Activated CD4-positive, alpha-beta T cell treated with anti-CD3 and anti-CD28 coated beads for 36 hours (primary cell): ENCODE measurements at regions of chrX and their contacts with region 1.

Region 1: GRCh38 chrX:78517124-78517523 is 142.0 kb downstream of the RTL3 start:
- DNase-seq: peak; percentile 70
- ATAC-seq: peak; percentile 83
- H3K4me3 Mint-ChIP-seq: peak overlapping the region; percentile 23
- H3K27ac Mint-ChIP-seq: peak overlapping the region; percentile 84
- H3K4me1 Mint-ChIP-seq: peaks cover 48% of the 10 kb centered on the region
- H3K27me3 Mint-ChIP-seq: no peaks in the 10 kb centered on the region

Region 2: GRCh38 chrX:77899081-77899828 is 617.9 kb before region 1 on chrX and contains the start of gene COX7B:
- CTCF ChIA-PET with region 1: no interaction called
- POLR2A ChIA-PET with region 1: no interaction called
- intact Hi-C with region 1: loop called in 1 of 2 experiments (anchors 10 kb)
- DNase-seq: peak; percentile 71
- ATAC-seq: peak; percentile 70
- H3K4me3 Mint-ChIP-seq: peak within 1 kb of the TSS; percentile 96
- H3K27ac Mint-ChIP-seq: peak within 1 kb of the TSS; percentile 97
- H3K4me1 Mint-ChIP-seq: peaks cover 20% of the 10 kb centered on the region
- H3K27me3 Mint-ChIP-seq: no peaks in the 10 kb centered on the region
- total RNA-seq, gene COX7B: 303 to 375 TPM

Region 3: DNA sequence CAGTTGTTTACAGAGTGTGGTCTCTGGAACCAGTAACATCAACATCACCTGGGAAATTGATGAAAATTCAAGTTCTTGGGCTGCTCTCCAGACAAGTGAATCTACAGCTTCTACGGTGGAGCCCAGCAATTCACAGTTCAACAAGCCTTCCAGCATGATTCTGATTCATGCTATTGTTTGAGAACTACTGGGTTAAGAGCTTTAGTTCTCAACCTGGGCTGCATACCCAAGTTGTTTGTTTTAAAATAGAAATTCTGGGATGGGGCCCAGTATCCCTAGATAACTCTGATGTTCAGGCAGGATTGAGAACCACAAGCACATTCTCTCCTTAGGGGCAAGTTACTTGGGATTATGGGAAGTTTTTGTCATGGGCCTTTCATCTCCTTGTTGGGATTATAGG is 451.0 kb before region 1 on chrX:
- CTCF ChIA-PET with region 1: no interaction called
- POLR2A ChIA-PET with region 1: no interaction called
- intact Hi-C with region 1: loop called in 1 of 2 experiments (anchors 5 kb)
- DNase-seq: no peak
- ATAC-seq: no peak
- H3K4me3 Mint-ChIP-seq: no peak overlapping the region
- H3K27ac Mint-ChIP-seq: no peak overlapping the region
- H3K4me1 Mint-ChIP-seq: peaks cover 18% of the 10 kb centered on the region
- H3K27me3 Mint-ChIP-seq: no peaks in the 10 kb centered on the region

Region 4: GRCh38 chrX:78333521-78333920 is 183.6 kb before region 1 on chrX:
- CTCF ChIA-PET with region 1: no interaction called
- POLR2A ChIA-PET with region 1: no interaction called
- intact Hi-C with region 1: loop called (anchors 2 to 5 kb)
- DNase-seq: no peak
- ATAC-seq: peak; percentile 40
- H3K4me3 Mint-ChIP-seq: no peak overlapping the region
- H3K27ac Mint-ChIP-seq: peak overlapping the region; percentile 42
- H3K4me1 Mint-ChIP-seq: peaks cover 61% of the 10 kb centered on the region
- H3K27me3 Mint-ChIP-seq: no peaks in the 10 kb centered on the region

Region 5: GRCh38 chrX:78548012-78548411 is 30.9 kb after region 1 on chrX:
- CTCF ChIA-PET with region 1: no interaction called
- POLR2A ChIA-PET with region 1: no interaction called
- intact Hi-C with region 1: loop called in 1 of 2 experiments (anchors 1 kb)
- DNase-seq: no peak
- ATAC-seq: peak; percentile 64
- H3K4me3 Mint-ChIP-seq: no peak overlapping the region
- H3K27ac Mint-ChIP-seq: no peak overlapping the region
- H3K4me1 Mint-ChIP-seq: peaks cover 9% of the 10 kb centered on the region
- H3K27me3 Mint-ChIP-seq: no peaks in the 10 kb centered on the region

Region 6: DNA sequence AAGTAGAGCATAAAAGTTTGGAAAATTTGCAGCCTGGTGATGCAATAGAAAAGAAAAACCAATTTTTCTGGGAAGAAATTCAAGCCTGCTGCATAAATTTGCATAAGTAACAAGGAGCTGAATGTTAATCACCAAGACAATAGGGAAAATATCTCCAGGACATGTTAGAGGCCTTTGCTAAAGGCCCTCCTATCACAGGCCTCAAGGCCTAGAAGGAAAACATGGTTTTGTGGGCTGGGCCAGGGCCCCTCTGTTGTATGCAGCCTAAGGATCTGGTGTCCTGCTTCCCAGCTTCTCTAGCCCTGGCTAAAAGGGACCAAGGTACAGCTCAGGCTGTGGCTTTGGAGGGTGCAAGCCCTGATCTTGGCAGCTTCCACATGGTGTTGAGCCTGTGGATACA is 148.2 kb after region 1 on chrX:
- CTCF ChIA-PET with region 1: no interaction called
- POLR2A ChIA-PET with region 1: no interaction called
- intact Hi-C with region 1: no loop called
- DNase-seq: no peak
- ATAC-seq: no peak
- H3K4me3 Mint-ChIP-seq: no peak overlapping the region
- H3K27ac Mint-ChIP-seq: no peak overlapping the region
- H3K4me1 Mint-ChIP-seq: no peaks in the 10 kb centered on the region
- H3K27me3 Mint-ChIP-seq: no peaks in the 10 kb centered on the region

Region 7: GRCh38 chrX:79146640-79147390 is 629.7 kb after region 1 on chrX:
- CTCF ChIA-PET with region 1: no interaction called
- POLR2A ChIA-PET with region 1: no interaction called
- intact Hi-C with region 1: loop called (anchors 5 to 10 kb)
- DNase-seq: no peak
- ATAC-seq: peak; percentile 52
- H3K4me3 Mint-ChIP-seq: peak overlapping the region; percentile 88
- H3K27ac Mint-ChIP-seq: peak overlapping the region; percentile 97
- H3K4me1 Mint-ChIP-seq: peaks cover 33% of the 10 kb centered on the region
- H3K27me3 Mint-ChIP-seq: no peaks in the 10 kb centered on the region

Region 8: GRCh38 chrX:79259073-79259689 is 742.1 kb after region 1 on chrX:
- CTCF ChIA-PET with region 1: no interaction called
- POLR2A ChIA-PET with region 1: no interaction called
- intact Hi-C with region 1: loop called (anchors 2 to 5 kb)
- DNase-seq: peak; percentile 61
- ATAC-seq: peak; percentile 84
- H3K4me3 Mint-ChIP-seq: peak overlapping the region; percentile 52
- H3K27ac Mint-ChIP-seq: peak overlapping the region; percentile 90
- H3K4me1 Mint-ChIP-seq: peaks cover 78% of the 10 kb centered on the region
- H3K27me3 Mint-ChIP-seq: no peaks in the 10 kb centered on the region